GM13976 (cell line): ENCODE measurements at regions of chr1 and their contacts with region 1.

Region 1: DNA sequence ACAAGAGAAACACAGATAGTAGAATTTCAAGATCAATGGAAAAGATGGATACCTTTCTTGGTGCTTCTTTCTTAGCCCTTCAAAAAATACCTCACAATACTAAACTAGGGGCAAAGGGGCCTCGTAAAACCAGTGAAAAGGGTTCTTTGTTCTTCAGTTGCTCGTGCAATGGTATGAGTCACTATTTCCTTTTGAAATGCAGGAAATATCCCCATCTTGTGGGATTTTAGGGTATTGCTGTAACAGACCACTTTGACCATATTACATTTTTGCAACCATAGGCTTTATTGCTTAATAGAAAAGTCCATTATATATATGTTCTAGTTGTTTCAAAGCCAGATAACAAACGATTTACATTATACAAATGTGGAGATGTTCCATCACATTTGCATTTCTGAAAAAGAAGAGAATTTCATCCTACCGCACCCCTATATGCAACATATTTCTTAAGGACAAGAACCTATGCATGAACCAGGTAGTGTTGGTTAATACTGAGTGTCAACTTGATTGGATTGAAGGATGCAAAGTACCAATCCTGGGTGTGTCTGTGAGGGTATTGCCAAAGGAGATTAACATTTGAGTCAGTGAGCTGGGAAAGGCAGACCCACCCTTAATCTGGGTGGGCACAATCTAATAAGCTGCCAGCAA is 88.6 kb upstream of the PKN2 start:
- DNase-seq: peak; percentile 18
- CTCF ChIP-seq: peak; percentile 20

Region 2: GRCh38 chr1:88180449-88181108 is 414.9 kb before region 1 on chr1:
- in situ Hi-C with region 1: loop called (anchors 25 kb)
- DNase-seq: peak; percentile 30
- CTCF ChIP-seq: peak; percentile 95

Region 3: GRCh38 chr1:88488277-88488676 is 107.2 kb before region 1 on chr1:
- in situ Hi-C with region 1: loop called (anchors 25 kb)
- DNase-seq: no peak
- CTCF ChIP-seq: no peak

Region 4: DNA sequence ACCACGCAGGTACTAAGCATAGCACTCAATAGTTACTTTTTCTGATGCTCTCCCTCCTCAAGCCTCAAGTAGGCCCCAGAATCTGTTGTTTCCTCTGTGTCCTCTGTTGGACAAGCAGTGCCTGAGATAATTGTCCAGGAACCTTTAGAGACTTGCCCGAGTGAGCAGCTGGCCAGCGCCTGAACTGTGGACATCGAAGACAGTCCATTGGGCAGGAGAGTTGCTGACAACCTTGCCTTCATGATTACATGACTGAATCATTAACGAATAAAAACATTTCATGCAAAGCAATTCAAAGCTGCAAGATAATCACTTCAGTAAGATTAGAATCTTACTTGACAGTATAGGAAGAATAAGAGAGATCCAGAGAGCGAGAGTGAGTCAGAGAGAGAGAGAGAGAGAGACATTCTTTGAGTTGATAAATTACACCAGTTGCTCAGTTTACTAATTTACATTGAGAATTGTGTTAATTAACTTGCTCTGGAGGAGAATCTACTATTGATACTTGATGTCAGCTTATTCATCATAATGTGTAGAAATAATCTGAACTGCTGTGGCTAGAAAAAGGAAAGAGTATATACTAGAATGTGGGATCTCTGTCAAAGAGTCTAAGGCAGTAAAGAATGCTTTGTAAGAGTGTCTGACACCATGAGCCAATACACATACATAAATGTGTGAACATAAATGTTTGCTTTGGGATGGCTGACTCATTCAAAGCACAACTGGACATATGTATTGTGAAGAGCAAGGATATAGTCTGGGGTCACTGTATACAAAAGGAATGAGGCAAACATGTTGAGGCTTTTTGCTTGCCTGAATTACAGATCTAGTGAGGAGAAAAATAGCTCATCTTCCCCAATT is 1615.4 kb after region 1 on chr1:
- in situ Hi-C with region 1: no loop called
- DNase-seq: no peak
- CTCF ChIP-seq: no peak